Right lobe of liver (tissue), 6 donors: ENCODE measurements at regions of chr2 and their contacts with region 1.

Region 1: GRCh38 chr2:112259509-112260294 is 4.9 kb upstream of the ZC3H8 start:
- DNase-seq: peak; percentile 78 to 85 (median 85)
- ATAC-seq: peak; percentile 81 to 83 (median 82)
- H3K4me3 ChIP-seq: no peak overlapping the region
- H3K27ac ChIP-seq: no peak overlapping the region
- H3K4me1 ChIP-seq: no peaks in the 10 kb centered on the region
- H3K27me3 ChIP-seq: no peaks in the 10 kb centered on the region
- CTCF ChIP-seq: peak; percentile 93 to 95 (median 94)
- POLR2A ChIP-seq: no peak

Region 2: DNA sequence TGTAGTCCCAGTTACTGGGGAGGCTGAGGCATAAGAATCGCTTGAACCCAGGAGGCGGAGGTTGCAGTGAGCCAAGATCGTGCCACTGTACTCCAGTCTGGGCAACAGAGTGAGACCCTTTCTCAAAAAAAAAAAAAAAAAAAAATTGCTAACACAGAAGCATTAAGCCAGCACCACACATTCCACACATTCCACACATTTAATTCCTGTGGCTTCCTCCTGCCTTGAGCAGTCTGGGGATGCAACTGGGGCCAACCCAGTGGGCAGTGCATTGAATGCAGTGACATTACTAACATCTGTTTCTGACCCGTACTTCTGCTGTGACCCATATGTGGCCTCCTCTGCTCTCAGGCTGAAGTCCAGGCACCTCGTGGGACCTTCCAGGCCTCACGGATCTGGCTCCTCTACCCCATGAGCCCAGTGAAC is 1032.0 kb before region 1 on chr2:
- intact Hi-C with region 1: no loop called
- DNase-seq: no peak
- ATAC-seq: peak; percentile 48 to 71 (median 50)
- H3K4me3 ChIP-seq: no peak overlapping the region
- H3K27ac ChIP-seq: no peak overlapping the region
- H3K4me1 ChIP-seq: peaks cover 0 to 12% (median 6%) of the 10 kb centered on the region in 4 donors
- H3K27me3 ChIP-seq: no peaks in the 10 kb centered on the region
- CTCF ChIP-seq: no peak
- POLR2A ChIP-seq: no peak

Region 3: GRCh38 chr2:112096098-112096497 is 163.6 kb before region 1 on chr2:
- intact Hi-C with region 1: no loop called
- DNase-seq: no peak
- ATAC-seq: no peak
- H3K4me3 ChIP-seq: no peak overlapping the region
- H3K27ac ChIP-seq: no peak overlapping the region
- H3K4me1 ChIP-seq: no peaks in the 10 kb centered on the region
- H3K27me3 ChIP-seq: no peaks in the 10 kb centered on the region
- CTCF ChIP-seq: no peak
- POLR2A ChIP-seq: no peak

Region 4: GRCh38 chr2:112433932-112434730 is 174.4 kb after region 1 on chr2:
- intact Hi-C with region 1: loop called in 1 of 2 experiments (anchors 10 kb)
- DNase-seq: peak in 1 of 3 donors; percentile 49
- ATAC-seq: no peak
- H3K4me3 ChIP-seq: no peak overlapping the region
- H3K27ac ChIP-seq: no peak overlapping the region
- H3K4me1 ChIP-seq: no peaks in the 10 kb centered on the region
- H3K27me3 ChIP-seq: no peaks in the 10 kb centered on the region
- CTCF ChIP-seq: no peak
- POLR2A ChIP-seq: no peak